MCF 10A (cell line): ENCODE measurements at regions of chr1 and their contacts with region 1.

Region 1: GRCh38 chr1:173867753-173868265 is at the start of gene GAS5:
- DNase-seq: peak; percentile 100
- H3K4me3 Mint-ChIP-seq: peak within 1 kb of the TSS; percentile 94
- H3K27ac Mint-ChIP-seq: peak within 1 kb of the TSS; percentile 96
- H3K4me1 Mint-ChIP-seq: peaks cover 55% of the 10 kb centered on the region
- H3K27me3 Mint-ChIP-seq: no peaks in the 10 kb centered on the region
- CTCF ChIP-seq: no peak
- total RNA-seq, gene GAS5: 3,184 and 3,772 TPM in 2 replicates

Region 2: GRCh38 chr1:173476664-173477285 is 391.0 kb before region 1 on chr1:
- CTCF ChIA-PET with region 1: interaction called, 5 read pairs
- POLR2A ChIA-PET with region 1: interaction called, 59 read pairs
- intact Hi-C with region 1: no loop called
- DNase-seq: peak; percentile 95
- H3K4me3 Mint-ChIP-seq: peak overlapping the region; percentile 97
- H3K27ac Mint-ChIP-seq: peak overlapping the region; percentile 99
- H3K4me1 Mint-ChIP-seq: peaks cover 62% of the 10 kb centered on the region
- H3K27me3 Mint-ChIP-seq: no peaks in the 10 kb centered on the region
- CTCF ChIP-seq: no peak

Region 3: GRCh38 chr1:173562813-173563212 is 305.0 kb before region 1 on chr1:
- CTCF ChIA-PET with region 1: no interaction called
- POLR2A ChIA-PET with region 1: no interaction called
- intact Hi-C with region 1: no loop called
- DNase-seq: no peak
- H3K4me3 Mint-ChIP-seq: no peak overlapping the region
- H3K27ac Mint-ChIP-seq: no peak overlapping the region
- H3K4me1 Mint-ChIP-seq: no peaks in the 10 kb centered on the region
- H3K27me3 Mint-ChIP-seq: no peaks in the 10 kb centered on the region
- CTCF ChIP-seq: no peak

Region 4: DNA sequence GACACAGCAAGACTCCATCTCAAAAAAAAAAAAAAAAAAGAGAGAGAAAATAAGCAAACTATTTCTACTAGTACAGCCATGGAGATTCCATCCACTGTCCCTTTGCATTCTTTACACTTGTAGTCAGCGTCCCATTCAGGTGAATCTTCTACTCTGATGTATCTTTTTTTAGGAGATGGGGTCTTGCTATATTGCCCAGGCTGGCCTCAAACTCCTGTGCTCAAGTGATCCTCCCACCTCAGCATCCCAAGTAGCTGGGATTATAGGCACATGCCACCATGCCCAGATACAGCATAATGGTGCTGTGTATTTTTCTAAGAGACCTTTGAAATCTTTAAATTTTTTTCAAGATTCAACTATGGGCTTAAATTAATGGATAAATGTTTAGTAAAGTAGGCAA is 35.1 kb before region 1 on chr1:
- CTCF ChIA-PET with region 1: interaction called, 5 read pairs
- POLR2A ChIA-PET with region 1: interaction called, 118 read pairs
- intact Hi-C with region 1: no loop called
- DNase-seq: no peak
- H3K4me3 Mint-ChIP-seq: no peak overlapping the region
- H3K27ac Mint-ChIP-seq: no peak overlapping the region
- H3K4me1 Mint-ChIP-seq: peaks cover 6% of the 10 kb centered on the region
- H3K27me3 Mint-ChIP-seq: no peaks in the 10 kb centered on the region
- CTCF ChIP-seq: no peak

Region 5: DNA sequence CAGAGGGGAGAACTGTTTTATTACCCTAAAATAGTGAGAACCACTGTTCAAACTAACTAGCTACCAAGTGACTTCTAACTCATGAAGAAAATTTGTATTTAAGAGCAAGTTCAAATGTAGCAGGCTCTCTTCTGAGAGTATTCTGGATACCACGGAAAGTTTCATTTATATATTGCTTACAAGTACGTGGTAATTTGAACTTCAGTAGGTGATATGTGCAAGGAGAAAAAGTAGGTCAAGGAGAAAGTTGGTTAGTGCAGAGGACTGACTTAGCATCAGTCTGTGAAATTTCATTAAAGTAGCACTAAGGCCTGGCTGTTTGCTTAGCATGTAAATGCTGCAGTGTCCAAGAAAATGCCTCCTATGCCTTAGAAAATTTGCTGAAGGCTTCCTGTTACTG is 32.6 kb after region 1 on chr1:
- CTCF ChIA-PET with region 1: interaction called, 5 read pairs
- POLR2A ChIA-PET with region 1: interaction called, 10 read pairs
- intact Hi-C with region 1: no loop called
- DNase-seq: no peak
- H3K4me3 Mint-ChIP-seq: no peak overlapping the region
- H3K27ac Mint-ChIP-seq: no peak overlapping the region
- H3K4me1 Mint-ChIP-seq: no peaks in the 10 kb centered on the region
- H3K27me3 Mint-ChIP-seq: no peaks in the 10 kb centered on the region
- CTCF ChIP-seq: no peak

Region 6: GRCh38 chr1:174022080-174022975 is 154.5 kb after region 1 on chr1 and contains the start of gene RC3H1:
- CTCF ChIA-PET with region 1: interaction called, 3 read pairs
- POLR2A ChIA-PET with region 1: interaction called, 37 read pairs
- intact Hi-C with region 1: loop called (anchors 2 kb)
- DNase-seq: peak; percentile 95
- H3K4me3 Mint-ChIP-seq: peak within 1 kb of the TSS; percentile 82
- H3K27ac Mint-ChIP-seq: peak within 1 kb of the TSS; percentile 95
- H3K4me1 Mint-ChIP-seq: peaks cover 38% of the 10 kb centered on the region
- H3K27me3 Mint-ChIP-seq: no peaks in the 10 kb centered on the region
- CTCF ChIP-seq: no peak
- total RNA-seq, gene RC3H1: 25.7 and 26.9 TPM in 2 replicates

Region 7: DNA sequence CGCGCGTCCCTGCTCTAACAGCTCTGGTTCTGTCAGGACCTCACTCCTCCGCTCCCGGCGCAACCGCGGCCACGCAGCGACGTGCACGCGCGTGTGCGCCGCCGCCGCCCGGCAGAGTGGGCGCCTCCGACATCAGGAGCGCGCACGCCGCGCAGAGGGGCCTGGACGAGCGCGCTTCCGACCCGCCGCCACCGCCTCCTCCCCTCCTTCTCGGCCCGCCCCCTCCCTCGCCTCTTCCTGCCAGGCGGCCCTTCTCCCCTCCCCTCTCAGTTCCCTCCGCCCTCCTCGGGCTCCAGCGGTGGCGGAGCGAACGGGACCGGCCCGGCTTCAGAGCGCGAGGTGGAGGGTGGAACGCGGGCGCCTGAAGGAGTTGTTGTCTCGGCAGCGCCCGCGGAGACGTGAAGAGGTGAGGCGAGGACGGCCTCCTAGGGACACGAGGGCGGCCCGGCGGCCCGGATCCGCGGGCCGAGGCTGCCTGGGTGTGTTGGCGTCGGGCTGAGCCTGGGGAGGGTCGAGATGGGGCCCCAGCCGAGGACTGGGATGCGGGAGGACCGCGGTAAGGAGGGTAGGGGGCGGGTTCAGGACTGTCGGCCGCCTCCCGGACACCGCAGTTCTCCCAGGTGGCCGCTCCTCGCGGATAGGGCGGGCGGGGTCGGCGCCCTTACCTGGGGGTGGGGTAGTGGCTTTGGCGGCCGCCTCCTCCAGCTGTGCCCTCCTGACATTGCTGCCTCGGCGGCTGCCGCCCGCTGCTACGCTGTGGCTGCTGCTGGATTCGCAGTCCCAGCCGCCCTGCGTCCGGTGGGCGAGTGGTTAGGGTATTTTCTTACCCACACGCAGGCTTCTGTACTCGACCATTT is 291.7 kb after region 1 on chr1 and contains the start of gene RABGAP1L:
- CTCF ChIA-PET with region 1: no interaction called
- POLR2A ChIA-PET with region 1: interaction called, 12 read pairs
- intact Hi-C with region 1: loop called (anchors 5 kb)
- DNase-seq: peak; percentile 96
- H3K4me3 Mint-ChIP-seq: peak within 1 kb of the TSS; percentile 97
- H3K27ac Mint-ChIP-seq: peak within 1 kb of the TSS; percentile 71
- H3K4me1 Mint-ChIP-seq: peaks cover 42% of the 10 kb centered on the region
- H3K27me3 Mint-ChIP-seq: no peaks in the 10 kb centered on the region
- CTCF ChIP-seq: no peak
- total RNA-seq, gene RABGAP1L: 18.2 and 19.0 TPM in 2 replicates